ENCODE measurements at regions of chr11 and their contacts with region 1.

Region 1: GRCh38 chr11:63945477-63946163 is 6.8 kb downstream of the NAA40 start:
- DNase-seq: peak; percentile 66 to 78
- H3K4me3 ChIP-seq: no peak overlapping the region
- H3K4me3 Mint-ChIP-seq: no peak overlapping the region
- H3K27ac Mint-ChIP-seq: no peak overlapping the region
- H3K4me1 ChIP-seq: peaks cover 4% of the 10 kb centered on the region; the same call in 1 of the 2 replicates
- H3K4me1 Mint-ChIP-seq: peaks cover 2% of the 10 kb centered on the region
- H3K27me3 ChIP-seq: no peaks in the 10 kb centered on the region
- H3K27me3 Mint-ChIP-seq: no peaks in the 10 kb centered on the region
- CTCF ChIP-seq: peak; percentile 67 to 70

Region 2: DNA sequence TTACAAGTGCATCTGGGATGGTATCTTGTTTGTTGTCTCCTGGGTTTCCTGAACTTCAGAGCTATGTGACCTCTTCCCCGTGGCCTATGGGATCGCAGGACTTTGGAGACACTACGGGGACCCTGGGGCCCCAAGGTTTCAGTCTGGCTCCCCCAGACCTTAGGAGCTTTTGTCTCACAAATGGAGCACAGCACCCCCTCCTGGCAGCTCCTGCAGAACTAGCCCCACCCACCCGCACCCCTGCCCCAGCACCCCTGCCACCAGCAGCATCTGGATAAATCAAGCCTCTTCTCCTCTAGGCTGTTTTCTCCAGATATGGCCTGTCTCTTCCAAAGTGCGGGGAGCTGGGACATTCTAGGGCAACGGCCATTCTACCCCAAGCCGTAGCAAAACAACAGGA is 39.0 kb before region 1 on chr11:
- CTCF ChIA-PET with region 1: interaction called, 4 read pairs
- POLR2A ChIA-PET with region 1: no interaction called
- intact Hi-C with region 1: loop called (anchors 5 kb)
- DNase-seq: peak in 1 of 2 experiments; percentile 46
- H3K4me3 ChIP-seq: no peak overlapping the region
- H3K4me3 Mint-ChIP-seq: no peak overlapping the region
- H3K27ac Mint-ChIP-seq: no peak overlapping the region
- H3K4me1 ChIP-seq: 0 out of 2 replicates have a peak, but pooled peaks cover 5% of the 10 kb centered on the region
- H3K4me1 Mint-ChIP-seq: no peaks in the 10 kb centered on the region
- H3K27me3 ChIP-seq: no peaks in the 10 kb centered on the region
- H3K27me3 Mint-ChIP-seq: no peaks in the 10 kb centered on the region
- CTCF ChIP-seq: peak; percentile 31 to 33

Region 3: DNA sequence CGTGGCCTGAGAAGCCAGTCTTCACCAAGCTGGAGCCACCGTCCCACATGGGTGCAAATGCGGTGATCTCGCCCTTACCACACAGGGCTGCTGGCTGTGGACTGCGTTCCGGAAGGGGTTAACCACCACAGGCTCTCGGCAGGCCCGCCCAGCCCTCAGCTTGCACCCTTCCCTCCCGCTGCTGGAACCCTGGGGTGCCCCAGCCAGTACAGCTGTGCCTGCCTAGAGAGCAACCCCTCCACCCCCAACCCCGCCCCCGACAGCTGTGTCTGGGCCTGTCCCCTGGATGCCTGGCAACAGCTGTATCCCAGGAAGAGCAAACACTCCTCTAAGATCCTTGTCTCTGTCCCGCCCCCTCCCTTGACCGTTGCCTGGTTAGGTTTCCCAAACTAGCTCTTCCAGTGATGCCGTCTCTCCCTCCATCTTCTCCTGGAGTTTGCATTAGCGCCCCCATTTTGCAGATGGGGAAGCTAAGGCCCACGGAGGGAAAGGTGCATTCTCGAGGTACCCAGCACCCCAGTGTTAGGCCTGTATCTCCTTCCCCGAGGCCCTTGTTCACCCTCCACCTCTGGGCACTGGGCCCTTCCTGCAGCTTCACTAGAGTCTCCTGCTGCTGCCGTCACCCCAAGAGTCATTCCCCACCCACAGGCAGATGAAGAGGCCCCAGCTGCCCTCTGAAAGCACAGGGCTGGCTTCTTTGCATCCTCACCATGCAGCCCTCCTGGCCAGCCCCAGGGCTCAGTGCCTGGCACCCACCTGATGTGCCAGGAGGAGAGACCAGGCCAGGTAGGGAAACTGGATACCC is 16.2 kb after region 1 on chr11:
- CTCF ChIA-PET with region 1: interaction called, 10 read pairs
- POLR2A ChIA-PET with region 1: no interaction called
- intact Hi-C with region 1: no loop called
- DNase-seq: peak; percentile 64 to 65
- H3K4me3 ChIP-seq: no peak overlapping the region
- H3K4me3 Mint-ChIP-seq: no peak overlapping the region
- H3K27ac Mint-ChIP-seq: no peak overlapping the region
- H3K4me1 ChIP-seq: no peaks in the 10 kb centered on the region
- H3K4me1 Mint-ChIP-seq: no peaks in the 10 kb centered on the region
- H3K27me3 ChIP-seq: no peaks in the 10 kb centered on the region
- H3K27me3 Mint-ChIP-seq: no peaks in the 10 kb centered on the region
- CTCF ChIP-seq: no peak